ENCODE measurements at regions of chr16 and their contacts with region 1.

Region 1: DNA sequence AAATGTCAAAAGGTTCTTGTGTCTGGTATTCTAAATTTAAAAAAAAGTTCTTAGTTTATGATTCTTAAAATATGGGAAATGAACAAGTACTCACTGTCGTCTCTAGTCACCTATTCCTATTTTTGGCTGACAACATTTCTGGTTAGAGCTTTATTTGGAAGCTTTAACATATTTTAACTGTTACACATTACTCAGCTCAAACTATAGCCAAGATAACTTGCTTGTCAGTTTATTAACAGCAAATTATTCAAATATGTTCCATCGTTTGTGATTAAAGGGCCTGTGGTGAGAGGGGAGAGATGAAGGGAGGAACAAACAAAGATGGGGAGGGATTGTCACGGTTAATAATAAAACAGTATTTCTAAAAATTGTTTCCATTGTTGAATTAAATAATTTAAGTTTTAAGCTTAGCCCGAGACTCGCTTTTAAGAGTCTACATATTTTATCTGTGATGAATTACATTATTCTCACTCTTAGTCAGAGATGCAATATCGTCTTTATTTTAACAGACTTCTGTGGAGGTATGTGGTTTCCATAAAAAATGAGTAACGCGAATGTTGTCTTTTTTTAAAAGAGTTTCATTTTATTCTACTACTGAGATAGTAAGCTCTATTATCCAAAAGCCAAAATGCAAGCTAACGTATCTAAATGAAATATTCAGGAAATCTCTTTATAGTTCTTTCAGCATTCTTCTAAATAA is 321.9 kb upstream of the PMFBP1 start:
- DNase-seq: no peak

Region 2: GRCh38 chr16:72210555-72210954 is 283.3 kb before region 1 on chr16:
- intact Hi-C with region 1: no loop called
- DNase-seq: no peak

Region 3: DNA sequence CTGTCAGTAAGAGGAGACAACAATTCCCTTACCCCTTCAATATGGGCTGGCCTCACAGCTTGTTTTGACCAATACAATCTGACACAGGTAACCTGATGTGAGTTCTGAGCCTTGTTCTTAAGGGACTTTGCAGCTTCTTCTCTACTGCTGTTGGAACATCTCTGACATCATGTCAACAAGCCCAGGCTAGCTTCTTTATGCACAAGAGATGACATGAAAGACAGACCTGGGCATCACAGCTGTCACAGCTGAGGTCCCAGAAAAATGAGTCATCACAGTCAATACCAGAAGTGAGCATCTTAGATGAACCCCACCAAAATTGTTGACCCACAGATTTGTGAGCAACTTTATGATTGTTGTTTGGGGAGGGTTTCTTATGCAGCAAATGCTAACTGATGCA is 1371.0 kb after region 1 on chr16:
- intact Hi-C with region 1: loop called (anchors 10 kb)
- DNase-seq: no peak

Measured in cardiac septum (tissue), 1 donor.